ENCODE measurements at regions of chr3 and their contacts with region 1.

Region 1: DNA sequence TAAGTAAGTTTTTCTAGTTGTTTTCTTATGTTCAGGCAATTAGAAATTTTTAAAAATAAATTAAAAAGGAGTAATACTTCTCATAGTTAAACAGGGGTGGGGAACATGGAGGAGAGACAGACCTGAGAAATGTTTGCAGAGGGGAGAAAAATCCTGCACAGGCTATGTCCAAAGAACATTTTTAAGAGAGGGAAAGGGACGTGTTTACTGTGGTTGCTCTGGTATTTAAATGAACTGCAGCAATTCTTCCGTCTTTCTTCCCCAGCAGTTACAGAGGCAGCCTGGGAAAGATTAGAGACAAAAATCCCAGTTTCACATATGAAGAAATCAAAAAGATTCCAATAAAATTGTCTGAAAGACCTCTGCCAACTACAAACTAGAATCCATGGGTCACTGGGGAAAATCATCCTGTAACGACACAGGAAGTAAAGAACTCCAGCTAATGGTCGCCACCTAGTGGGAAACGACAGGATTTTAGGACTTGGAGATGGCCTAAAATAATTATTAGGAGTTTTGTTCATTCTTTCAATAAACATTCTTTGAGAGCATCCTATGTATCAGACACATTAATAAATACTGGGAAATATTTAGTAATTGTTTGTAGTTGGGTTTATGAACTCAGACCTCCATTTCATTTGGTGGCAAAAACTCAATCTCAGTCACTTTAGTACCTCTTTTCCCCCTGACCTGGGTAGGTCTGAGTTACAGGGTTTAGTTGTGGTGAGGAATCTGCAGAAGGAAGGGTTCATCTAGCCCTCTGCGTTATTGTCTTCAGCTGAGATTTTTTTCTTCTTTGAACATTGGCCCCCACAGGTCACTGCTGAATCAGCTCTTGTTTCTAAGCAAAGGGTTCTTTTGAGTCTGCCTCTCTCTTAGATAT is 69.9 kb upstream of the GOLIM4 start:
- DNase-seq: no peak
- ATAC-seq: peak; percentile 90

Region 2: DNA sequence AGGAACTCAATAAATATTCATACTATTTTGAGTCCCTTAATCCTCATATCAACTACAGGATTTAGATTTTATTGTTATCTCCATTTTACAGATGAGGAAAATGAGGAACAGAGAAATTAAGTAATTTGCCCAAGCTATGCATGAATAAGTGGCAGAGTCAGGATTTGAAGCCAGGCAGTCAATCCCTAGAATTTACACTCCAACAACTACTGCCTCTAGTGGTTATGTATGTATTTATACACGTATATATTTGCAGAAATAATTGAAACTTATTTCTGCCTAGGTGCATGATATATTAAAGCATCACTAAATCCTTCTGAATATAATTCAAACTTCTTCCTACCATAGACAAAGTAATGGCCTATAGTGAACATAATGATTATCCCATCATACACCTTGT is 292.7 kb before region 1 on chr3:
- intact Hi-C with region 1: no loop called
- DNase-seq: no peak
- ATAC-seq: no peak

Region 3: DNA sequence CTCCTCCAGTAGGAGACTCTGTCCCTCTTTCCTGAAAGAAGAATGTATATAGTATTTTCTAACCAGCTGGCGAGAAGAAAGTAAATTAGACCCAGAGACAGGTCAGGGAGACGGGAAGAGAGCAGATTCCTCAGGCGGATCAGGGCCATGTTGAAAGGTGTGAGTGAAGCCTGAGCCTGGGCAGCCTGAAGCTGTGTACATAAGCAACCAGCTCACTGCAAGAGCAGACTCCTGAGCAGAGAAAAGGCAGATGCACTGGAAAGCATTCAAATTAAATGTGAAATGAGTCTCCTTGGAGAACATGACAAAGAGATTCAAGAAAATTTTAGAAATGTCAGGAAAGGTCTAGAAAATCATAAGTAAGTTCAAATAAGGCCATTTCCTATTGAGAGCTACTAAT is 235.7 kb before region 1 on chr3:
- intact Hi-C with region 1: loop called (anchors 10 kb)
- DNase-seq: no peak
- ATAC-seq: peak; percentile 79

Region 4: DNA sequence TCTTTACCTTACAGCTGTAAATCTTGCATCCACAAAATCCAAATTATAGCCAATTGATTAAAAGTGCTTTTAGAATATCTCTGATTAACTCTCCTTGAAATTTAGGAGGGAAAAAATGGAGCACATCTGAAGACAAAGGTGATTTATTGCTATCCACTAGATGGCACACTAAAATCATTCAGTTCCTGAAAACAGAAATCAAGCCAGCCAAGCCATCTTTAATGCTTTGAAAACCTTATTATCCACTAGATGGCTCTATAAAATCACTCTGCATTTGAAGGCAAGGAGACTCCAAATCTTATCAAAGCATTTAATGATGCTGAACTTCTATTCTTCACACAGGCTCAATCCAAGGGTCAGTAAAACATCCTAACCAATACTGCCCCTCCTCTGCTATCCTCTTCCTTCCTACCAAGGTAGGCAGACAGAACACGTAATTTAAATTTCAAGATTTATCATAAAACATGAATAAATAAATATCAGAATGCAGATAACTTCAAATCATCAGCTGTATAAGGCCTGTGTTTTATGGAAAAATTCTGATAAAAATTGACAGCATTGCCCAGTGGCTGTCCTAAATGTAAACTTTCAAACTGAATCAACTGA is 118.3 kb before region 1 on chr3:
- intact Hi-C with region 1: loop called (anchors 2 kb)
- DNase-seq: no peak
- ATAC-seq: peak; percentile 76

Region 5: DNA sequence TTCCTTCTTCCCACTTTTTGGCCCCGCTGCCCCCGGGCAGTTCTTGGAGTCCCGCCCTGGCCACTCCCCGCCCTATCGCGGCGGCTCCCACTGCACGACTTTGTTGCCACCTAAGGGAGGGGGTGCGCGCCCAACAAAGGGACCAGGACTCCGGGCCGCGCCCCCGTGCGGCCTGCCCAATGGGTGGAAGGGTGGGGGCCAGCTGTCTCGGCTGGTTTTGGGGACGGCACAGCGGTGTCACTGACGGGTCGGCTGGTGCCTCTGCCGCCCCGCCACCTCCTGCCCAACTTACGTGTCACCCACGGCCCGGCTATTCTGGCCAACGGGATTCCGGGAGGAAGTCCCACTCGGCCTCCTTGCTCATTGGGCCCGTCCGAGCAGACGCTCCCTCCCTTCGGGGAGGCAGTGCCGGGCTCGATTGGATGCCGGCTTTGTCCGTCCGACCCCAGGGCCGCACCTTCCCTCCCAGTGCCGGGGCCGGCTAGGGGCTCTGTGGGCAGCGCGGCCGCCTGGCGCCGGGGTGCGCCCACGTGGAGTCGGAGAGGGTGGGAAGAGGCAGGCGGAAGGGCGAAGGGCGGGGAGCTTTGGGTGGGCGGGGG is 69.9 kb before region 1 on chr3 and contains the start of gene GOLIM4:
- intact Hi-C with region 1: loop called (anchors 10 kb)
- DNase-seq: peak; percentile 96
- ATAC-seq: peak; percentile 95
- total RNA-seq, gene GOLIM4: 52.6 TPM